ENCODE measurements at regions of chr18 and their contacts with region 1.

Region 1: GRCh38 chr18:21600526-21601410 is at the start of gene ESCO1:
- DNase-seq: peak; percentile 95 to 97
- H3K4me3 ChIP-seq: peak within 1 kb of the TSS; percentile 76 to 86
- H3K27ac ChIP-seq: peak within 1 kb of the TSS; percentile 94 to 98
- H3K4me1 ChIP-seq: peaks cover 0 to 31% (median 13%) of the 10 kb centered on the region in 4 donors
- H3K27me3 ChIP-seq: no peaks in the 10 kb centered on the region
- CTCF ChIP-seq: peak; percentile 98 to 99

Region 2: GRCh38 chr18:21704603-21705364 is 104.0 kb after region 1 on chr18 and contains the start of gene ABHD3:
- intact Hi-C with region 1: loop called (anchors 10 kb)
- DNase-seq: peak; percentile 92 to 97
- H3K4me3 ChIP-seq: peak within 1 kb of the TSS; percentile 87 to 93
- H3K27ac ChIP-seq: peak within 1 kb of the TSS; percentile 91 to 93
- H3K4me1 ChIP-seq: peaks cover 0 to 20% (median 11%) of the 10 kb centered on the region in 4 donors
- H3K27me3 ChIP-seq: no peaks in the 10 kb centered on the region
- CTCF ChIP-seq: peak; percentile 66 to 69

Region 3: DNA sequence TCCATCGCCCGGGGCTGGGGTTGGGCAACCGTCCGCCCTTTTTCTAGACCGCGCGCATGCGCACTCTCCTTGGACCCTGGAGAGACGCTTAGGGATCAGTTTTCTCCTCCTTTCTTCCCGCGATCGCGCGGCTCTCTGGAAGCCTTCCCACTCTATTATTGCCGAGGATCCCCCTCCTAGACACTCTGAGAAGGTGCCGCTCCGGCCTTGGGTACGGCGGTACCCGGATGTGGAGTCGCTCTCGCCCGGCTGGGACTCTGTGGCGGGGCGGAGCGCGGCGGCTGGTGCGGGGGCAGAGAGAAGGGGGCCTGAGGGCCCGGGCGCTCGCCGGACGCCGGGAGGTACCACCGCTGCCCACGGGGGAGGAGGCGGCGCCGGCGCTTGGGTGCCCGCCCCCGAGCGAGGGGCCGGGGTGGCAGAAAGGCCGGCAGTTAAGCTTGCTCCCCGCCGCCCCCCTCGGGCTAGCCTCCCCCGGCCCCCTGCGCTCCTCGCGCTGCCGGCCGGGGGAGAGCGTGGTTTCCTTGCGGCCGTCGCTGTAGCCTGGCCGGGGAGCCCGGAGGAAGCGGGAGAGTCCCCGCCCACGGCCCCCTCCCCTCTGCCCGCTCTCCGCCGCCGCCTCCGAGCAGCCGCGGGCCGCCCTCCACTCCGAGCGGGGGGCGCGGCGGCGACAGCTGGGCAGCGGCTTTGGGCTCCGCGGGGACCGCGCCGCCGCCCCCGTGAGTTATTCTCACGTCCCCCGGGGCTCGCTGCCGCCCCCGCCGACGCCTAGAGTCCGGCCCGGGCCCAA is 140.1 kb after region 1 on chr18 and contains the start of gene MIB1:
- intact Hi-C with region 1: loop called (anchors 5 kb)
- DNase-seq: peak; percentile 45 to 80
- H3K4me3 ChIP-seq: peak within 1 kb of the TSS; percentile 95 to 98
- H3K27ac ChIP-seq: peak within 1 kb of the TSS; percentile 99
- H3K4me1 ChIP-seq: peaks cover 0 to 38% (median 11%) of the 10 kb centered on the region in 4 donors
- H3K27me3 ChIP-seq: no peaks in the 10 kb centered on the region
- CTCF ChIP-seq: no peak

Region 4: DNA sequence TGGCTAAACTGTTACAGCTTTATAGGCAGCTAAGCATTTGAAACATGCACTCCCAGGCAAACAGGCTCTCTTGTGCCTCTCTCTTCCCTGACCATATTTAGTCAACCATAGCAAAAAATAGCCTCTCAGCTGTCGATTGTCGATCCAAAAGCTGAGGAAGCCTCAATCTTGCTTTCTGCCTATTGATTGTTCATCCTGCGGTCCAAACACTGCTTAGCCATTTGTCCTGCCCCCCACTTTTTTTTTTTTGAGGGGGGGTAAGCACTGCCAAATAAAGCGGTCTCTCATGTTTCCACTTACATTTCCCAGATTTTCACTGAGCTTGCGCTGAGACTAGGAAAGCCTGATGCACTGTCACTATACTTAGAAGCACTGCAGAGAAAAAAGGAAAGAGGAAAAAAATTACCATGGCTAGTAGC is 230.7 kb after region 1 on chr18:
- intact Hi-C with region 1: loop called (anchors 10 kb)
- DNase-seq: peak; percentile 39 to 80
- H3K4me3 ChIP-seq: peak overlapping the region; percentile 41 to 46
- H3K27ac ChIP-seq: peak overlapping the region; percentile 65 to 71
- H3K4me1 ChIP-seq: peaks cover 0 to 59% (median 10%) of the 10 kb centered on the region in 4 donors
- H3K27me3 ChIP-seq: no peaks in the 10 kb centered on the region
- CTCF ChIP-seq: no peak

Region 5: DNA sequence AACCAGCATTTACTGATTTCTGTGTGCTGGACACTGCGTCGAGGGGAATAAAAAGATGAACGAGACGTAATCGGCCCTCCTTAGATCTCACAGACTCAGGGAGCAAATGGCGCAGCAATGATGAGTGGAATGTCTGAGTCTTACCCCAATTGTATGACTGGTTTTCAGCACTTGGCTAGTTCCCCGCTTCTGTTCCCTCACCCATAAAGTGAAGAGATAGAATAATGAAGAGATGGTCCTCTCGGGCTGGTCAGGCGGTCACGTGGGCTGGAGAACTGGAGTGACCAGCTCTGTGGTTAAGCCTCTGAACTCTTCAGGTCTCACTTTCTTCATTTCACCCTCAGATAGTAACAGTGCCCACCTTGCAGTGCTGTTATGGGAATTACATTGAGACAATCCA is 551.4 kb after region 1 on chr18:
- intact Hi-C with region 1: no loop called
- DNase-seq: no peak
- H3K4me3 ChIP-seq: no peak overlapping the region
- H3K27ac ChIP-seq: no peak overlapping the region
- H3K4me1 ChIP-seq: no peaks in the 10 kb centered on the region
- H3K27me3 ChIP-seq: no peaks in the 10 kb centered on the region
- CTCF ChIP-seq: no peak

Region 6: GRCh38 chr18:22238036-22238435 is 637.3 kb after region 1 on chr18:
- intact Hi-C with region 1: no loop called
- DNase-seq: no peak
- H3K4me3 ChIP-seq: no peak overlapping the region
- H3K27ac ChIP-seq: no peak overlapping the region
- H3K4me1 ChIP-seq: no peaks in the 10 kb centered on the region
- H3K27me3 ChIP-seq: no peaks in the 10 kb centered on the region
- CTCF ChIP-seq: no peak

Measured in tibial artery (tissue), 4 donors.